ENCODE measurements at regions of chr4 and their contacts with region 1.

Region 1: DNA sequence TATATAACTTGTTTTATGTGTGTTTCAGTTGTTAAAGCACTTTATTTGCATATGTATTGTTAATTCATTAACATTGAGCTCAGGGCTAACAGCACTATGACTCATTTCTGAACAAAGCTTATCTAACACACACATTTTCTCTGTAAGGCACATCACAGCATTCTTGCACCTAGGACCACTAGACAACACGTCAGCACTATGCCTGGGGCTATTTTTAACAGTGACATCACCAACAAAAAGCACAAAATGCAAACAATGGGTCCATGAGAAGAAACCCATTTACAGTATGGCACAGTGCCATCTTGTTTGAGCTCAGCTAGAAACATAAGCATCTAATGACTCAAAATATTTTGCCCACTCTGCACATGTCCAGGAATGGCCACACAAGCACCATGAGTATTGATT is 124.4 kb downstream of the RELL1 start:
- ATAC-seq: peak; percentile 29 to 96 (median 90)
- H3K4me3 ChIP-seq: no peak overlapping the region
- H3K27ac ChIP-seq: no peak overlapping the region
- H3K4me1 ChIP-seq: peaks cover 0 to 3% of the 10 kb centered on the region in 2 donors

Region 2: DNA sequence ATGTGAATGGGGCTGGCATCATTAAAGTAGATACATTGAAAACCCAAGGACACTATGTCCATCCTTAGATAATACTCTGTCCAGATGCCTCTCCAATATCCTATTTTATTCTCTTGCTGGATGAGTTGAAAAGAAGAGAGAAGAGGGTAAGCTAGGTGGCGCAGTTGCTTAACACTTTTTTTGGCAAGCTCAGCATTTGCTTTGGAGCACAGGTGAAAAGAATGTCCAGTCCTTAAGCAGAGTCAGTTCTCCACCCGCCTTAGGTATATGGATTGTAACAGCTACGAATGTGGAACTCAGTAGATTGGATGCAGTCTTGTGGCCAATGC is 108.9 kb before region 1 on chr4:
- in situ Hi-C with region 1: loop called in 4 of 9 experiments (anchors 10 to 25 kb)
- ATAC-seq: peak; percentile 44 to 66 (median 56)
- H3K4me3 ChIP-seq: peak overlapping the region; percentile 47 to 70 (median 52)
- H3K27ac ChIP-seq: no peak overlapping the region
- H3K4me1 ChIP-seq: peaks cover 6% of the 10 kb centered on the region in 2 donors

Region 3: DNA sequence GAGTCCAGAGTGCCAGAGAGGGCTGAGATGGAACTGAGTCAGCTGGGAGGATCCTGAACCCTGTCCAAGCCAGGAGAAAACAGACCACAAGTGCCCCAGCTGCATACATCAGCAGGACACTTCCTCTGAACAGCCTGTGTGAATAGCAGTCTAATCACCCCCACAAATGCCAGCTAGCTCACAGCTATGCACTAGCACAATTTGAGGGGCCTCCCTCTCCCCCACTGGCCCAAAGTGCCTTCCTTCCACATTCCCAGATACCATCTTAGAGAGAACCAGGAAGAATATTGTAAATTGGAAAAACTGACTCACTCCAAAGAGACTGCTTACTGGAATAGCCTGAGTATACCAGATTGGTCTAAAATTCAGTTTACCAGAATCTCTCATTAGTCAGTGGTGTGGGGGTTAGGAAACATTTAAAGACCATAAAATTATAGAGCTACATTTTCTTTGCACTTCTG is 809.6 kb after region 1 on chr4:
- in situ Hi-C with region 1: no loop called
- ATAC-seq: peak in 3 of 8 experiments; percentile 65 to 82 (median 65)
- H3K4me3 ChIP-seq: no peak overlapping the region
- H3K27ac ChIP-seq: no peak overlapping the region
- H3K4me1 ChIP-seq: peaks cover 0 to 9% of the 10 kb centered on the region in 2 donors